ENCODE measurements at regions of chr3 and their contacts with region 1.

Region 1: GRCh38 chr3:194269610-194270145 is 81.5 kb downstream of the CPN2 start:
- DNase-seq: peak; percentile 82 to 88
- H3K4me3 ChIP-seq: peak overlapping the region; percentile 38; the same call in 1 of the 2 replicates
- H3K27ac ChIP-seq: peak overlapping the region; percentile 91
- H3K4me1 ChIP-seq: peaks cover 72% of the 10 kb centered on the region
- H3K27me3 ChIP-seq: no peaks in the 10 kb centered on the region
- CTCF ChIP-seq: peak; percentile 76

Region 2: GRCh38 chr3:194158922-194159439 is 110.7 kb before region 1 on chr3:
- CTCF ChIA-PET with region 1: no interaction called
- POLR2A ChIA-PET with region 1: no interaction called
- intact Hi-C with region 1: loop called (anchors 2 kb)
- DNase-seq: peak; percentile 86 to 98
- H3K4me3 ChIP-seq: no peak overlapping the region; the same call in 1 of the 2 replicates
- H3K27ac ChIP-seq: peak overlapping the region; percentile 86
- H3K4me1 ChIP-seq: peaks cover 57% of the 10 kb centered on the region
- H3K27me3 ChIP-seq: no peaks in the 10 kb centered on the region
- CTCF ChIP-seq: no peak

Region 3: GRCh38 chr3:194184265-194184751 is 85.4 kb before region 1 on chr3:
- CTCF ChIA-PET with region 1: no interaction called
- POLR2A ChIA-PET with region 1: no interaction called
- intact Hi-C with region 1: no loop called
- DNase-seq: peak in 1 of 2 experiments; percentile 62
- H3K4me3 ChIP-seq: no peak overlapping the region
- H3K27ac ChIP-seq: no peak overlapping the region
- H3K4me1 ChIP-seq: peaks cover 10% of the 10 kb centered on the region
- H3K27me3 ChIP-seq: no peaks in the 10 kb centered on the region
- CTCF ChIP-seq: no peak

Region 4: DNA sequence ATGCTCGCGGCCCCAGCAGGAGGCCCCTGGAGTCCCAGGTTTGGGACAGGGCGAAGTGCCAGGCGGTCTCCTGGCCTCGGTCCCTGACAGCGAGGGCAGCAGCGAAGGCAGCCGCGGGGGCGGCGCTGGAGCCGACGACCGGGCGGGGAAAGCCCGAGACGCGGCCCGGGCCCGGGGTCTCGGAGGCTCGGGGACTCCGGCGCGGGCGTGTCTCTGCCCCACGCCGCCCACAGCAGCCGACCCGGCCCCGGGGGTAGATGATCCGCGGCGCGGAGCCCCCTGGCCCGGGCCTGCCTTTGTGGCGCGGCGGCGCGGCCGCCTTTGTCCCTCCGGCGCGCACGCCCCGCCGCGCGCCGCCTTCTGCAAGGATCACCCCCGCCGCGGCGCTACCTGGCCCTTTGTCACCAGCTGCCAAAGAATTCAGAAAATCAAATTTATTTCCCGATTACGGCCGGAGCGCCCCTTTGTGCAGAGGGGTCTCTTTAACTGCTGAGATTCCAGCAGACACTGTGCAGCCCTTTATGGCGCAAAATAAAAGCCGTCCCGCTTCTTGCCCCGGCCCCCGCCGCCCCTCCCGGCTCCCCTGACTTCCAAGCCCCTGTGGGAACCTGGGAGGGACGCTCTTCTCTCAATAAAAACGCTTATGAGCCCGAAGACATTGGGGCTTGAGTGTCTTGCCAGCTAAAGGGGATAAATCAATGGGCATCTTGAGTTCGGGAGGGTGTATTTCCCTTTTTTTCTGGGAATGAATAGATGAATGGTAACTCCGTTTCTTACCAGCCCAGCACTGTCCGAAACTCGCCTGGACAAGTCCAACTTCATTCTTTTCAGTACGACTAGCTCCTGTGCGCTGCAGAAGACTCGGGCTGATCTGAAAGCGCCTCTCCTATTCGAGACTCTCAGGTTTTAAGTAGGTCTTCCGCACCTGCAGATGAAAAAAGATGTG is 65.4 kb before region 1 on chr3:
- CTCF ChIA-PET with region 1: no interaction called
- POLR2A ChIA-PET with region 1: no interaction called
- intact Hi-C with region 1: loop called (anchors 2 kb)
- DNase-seq: peak; percentile 62 to 78
- H3K4me3 ChIP-seq: peak overlapping the region; percentile 58
- H3K27ac ChIP-seq: peak overlapping the region; percentile 71
- H3K4me1 ChIP-seq: peaks cover 47% of the 10 kb centered on the region
- H3K27me3 ChIP-seq: no peaks in the 10 kb centered on the region
- CTCF ChIP-seq: no peak

Region 5: GRCh38 chr3:194212845-194213320 is 56.8 kb before region 1 on chr3:
- CTCF ChIA-PET with region 1: interaction called, 3 read pairs
- POLR2A ChIA-PET with region 1: interaction called, 7 read pairs
- intact Hi-C with region 1: loop called (anchors 2 kb)
- DNase-seq: peak; percentile 93 to 97
- H3K4me3 ChIP-seq: no peak overlapping the region
- H3K27ac ChIP-seq: peak overlapping the region; percentile 49
- H3K4me1 ChIP-seq: peaks cover 27% of the 10 kb centered on the region
- H3K27me3 ChIP-seq: no peaks in the 10 kb centered on the region
- CTCF ChIP-seq: no peak

Region 6: GRCh38 chr3:194296454-194297263 is 27.0 kb after region 1 on chr3:
- CTCF ChIA-PET with region 1: interaction called, 5 read pairs
- POLR2A ChIA-PET with region 1: interaction called, 6 read pairs
- intact Hi-C with region 1: loop called (anchors 1 kb)
- DNase-seq: peak; percentile 94 to 98
- H3K4me3 ChIP-seq: peak overlapping the region; percentile 57
- H3K27ac ChIP-seq: peak overlapping the region; percentile 97
- H3K4me1 ChIP-seq: peaks cover 65% of the 10 kb centered on the region
- H3K27me3 ChIP-seq: no peaks in the 10 kb centered on the region
- CTCF ChIP-seq: peak; percentile 30; the same call in 1 of the 2 replicates

Region 7: DNA sequence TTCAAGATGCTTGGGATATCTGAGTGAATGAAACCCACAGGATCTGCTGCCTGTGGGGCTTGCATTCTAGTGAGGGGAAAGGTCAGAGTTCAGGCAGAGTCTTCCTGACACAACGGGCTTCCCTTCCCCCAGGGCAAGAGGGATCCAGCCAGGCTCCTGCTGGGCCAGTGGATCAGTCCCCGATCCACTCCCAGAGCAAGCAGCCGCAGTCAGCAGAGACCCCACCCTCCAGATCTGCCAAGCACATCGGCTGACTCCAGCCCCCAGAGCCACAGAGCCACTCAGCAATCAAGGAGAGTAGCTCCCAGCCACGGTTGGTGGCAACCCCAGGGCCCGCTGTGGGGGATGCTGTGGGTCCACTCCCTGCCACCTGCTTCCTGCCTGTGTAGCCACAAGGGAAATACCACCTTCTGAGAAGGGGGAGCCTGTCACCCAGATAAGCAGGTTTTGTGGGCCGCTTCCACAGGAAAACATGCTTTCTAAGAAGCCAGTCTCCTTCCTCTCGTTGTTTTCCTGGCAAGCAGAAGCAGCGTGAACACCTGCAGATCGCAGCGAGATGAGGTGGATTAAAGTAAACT is 36.5 kb after region 1 on chr3:
- CTCF ChIA-PET with region 1: no interaction called
- POLR2A ChIA-PET with region 1: interaction called, 12 read pairs
- intact Hi-C with region 1: no loop called
- DNase-seq: no peak
- H3K4me3 ChIP-seq: no peak overlapping the region
- H3K27ac ChIP-seq: no peak overlapping the region
- H3K4me1 ChIP-seq: peaks cover 7% of the 10 kb centered on the region; the same call in 1 of the 2 replicates
- H3K27me3 ChIP-seq: no peaks in the 10 kb centered on the region
- CTCF ChIP-seq: no peak

Region 8: DNA sequence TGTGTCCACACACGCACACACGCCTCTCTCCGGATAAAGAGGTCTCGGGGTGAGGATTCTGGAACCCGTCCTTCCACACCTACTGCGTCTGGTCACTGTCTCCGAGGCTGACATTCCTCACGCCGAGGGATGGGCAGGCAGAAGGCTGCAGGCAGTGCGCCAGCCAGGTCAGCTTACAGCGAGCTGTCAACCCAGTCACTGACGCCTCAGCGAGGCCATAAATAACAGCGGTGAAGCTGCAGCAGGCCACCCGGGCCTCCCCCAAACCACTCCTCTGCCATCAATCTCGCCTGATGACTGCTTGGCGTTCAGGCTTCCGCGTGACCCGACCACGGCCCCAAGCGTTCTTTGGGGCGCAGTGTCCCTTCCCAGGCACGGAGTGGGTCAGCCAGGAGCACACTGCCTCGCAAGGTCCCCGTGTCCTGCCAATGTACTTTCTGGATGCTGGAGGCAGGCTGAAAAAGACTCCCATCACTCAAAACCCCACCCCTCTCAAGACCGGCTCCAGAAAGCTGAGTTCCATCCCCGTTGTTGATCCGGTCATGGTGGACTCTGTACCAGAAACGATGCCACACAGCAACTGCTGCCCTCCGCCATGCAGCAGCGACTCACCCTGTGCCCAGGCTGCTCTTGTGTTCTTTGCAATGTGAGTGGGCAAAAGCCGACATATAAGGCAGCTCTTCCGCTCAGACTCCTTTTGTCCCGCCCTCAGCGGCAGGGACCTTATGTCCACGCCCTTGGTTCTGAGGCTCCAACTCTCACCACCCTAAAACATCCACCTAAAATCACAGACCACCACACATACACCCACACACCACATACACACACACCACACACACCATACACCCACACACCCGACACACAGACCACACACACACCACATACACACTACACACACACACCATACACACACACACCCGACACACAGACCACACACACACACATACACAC is 54.4 kb after region 1 on chr3:
- CTCF ChIA-PET with region 1: interaction called, 3 read pairs
- POLR2A ChIA-PET with region 1: interaction called, 6 read pairs
- intact Hi-C with region 1: loop called (anchors 2 kb)
- DNase-seq: peak; percentile 60 to 72
- H3K4me3 ChIP-seq: no peak overlapping the region
- H3K27ac ChIP-seq: peak overlapping the region; percentile 98
- H3K4me1 ChIP-seq: peaks cover 39% of the 10 kb centered on the region
- H3K27me3 ChIP-seq: no peaks in the 10 kb centered on the region
- CTCF ChIP-seq: no peak

Region 9: DNA sequence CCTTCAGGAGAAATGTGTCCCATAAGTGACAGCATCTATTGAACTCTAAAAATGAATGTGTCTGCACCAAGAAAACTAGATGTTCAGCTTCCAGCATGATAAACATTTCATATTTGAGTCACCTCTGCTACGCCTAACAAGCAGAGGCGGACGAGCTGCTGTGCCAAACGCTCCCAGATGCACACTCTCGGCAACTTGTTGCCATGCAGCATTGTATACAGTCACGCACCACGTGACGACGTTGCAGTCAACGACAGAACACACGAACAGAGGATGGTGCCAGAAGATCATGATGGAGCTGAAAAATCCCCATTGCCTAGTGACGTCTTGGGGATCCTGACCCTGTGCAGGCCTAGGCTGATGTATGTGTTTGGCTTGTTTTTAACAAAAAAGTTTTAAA is 863.8 kb after region 1 on chr3:
- CTCF ChIA-PET with region 1: no interaction called
- POLR2A ChIA-PET with region 1: no interaction called
- intact Hi-C with region 1: no loop called
- DNase-seq: no peak
- H3K4me3 ChIP-seq: no peak overlapping the region
- H3K27ac ChIP-seq: no peak overlapping the region
- H3K4me1 ChIP-seq: no peaks in the 10 kb centered on the region
- H3K27me3 ChIP-seq: no peaks in the 10 kb centered on the region
- CTCF ChIP-seq: no peak

Measured in PC-9 (cell line).